Panc1 (cell line): ENCODE measurements at regions of chr15 and their contacts with region 1.

Region 1: DNA sequence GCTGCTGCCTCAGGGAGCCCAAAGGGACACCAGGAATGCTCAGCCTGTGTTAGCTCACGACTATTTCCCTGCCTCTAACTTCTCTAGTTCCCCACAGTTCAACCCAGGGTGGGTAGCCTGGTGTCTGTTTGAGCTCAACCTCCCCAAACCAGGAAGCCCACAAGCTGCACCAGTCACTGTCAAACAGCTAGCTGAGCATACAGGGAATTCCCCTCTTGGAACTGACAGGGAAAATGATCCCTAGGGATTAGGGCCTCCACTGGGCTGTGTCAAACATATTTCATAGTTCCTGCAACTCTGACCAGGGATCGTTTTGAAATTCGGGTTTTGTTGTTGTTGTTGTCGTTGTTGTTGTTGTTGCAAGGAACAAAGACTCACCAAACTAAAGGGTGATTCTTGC is 147.1 kb upstream of the ICE2 start:
- DNase-seq: no peak
- ATAC-seq: no peak
- H3K4me3 ChIP-seq: no peak overlapping the region
- H3K27ac ChIP-seq: no peak overlapping the region
- H3K4me1 ChIP-seq: no peaks in the 10 kb centered on the region
- H3K27me3 ChIP-seq: no peaks in the 10 kb centered on the region
- CTCF ChIP-seq: no peak

Region 2: DNA sequence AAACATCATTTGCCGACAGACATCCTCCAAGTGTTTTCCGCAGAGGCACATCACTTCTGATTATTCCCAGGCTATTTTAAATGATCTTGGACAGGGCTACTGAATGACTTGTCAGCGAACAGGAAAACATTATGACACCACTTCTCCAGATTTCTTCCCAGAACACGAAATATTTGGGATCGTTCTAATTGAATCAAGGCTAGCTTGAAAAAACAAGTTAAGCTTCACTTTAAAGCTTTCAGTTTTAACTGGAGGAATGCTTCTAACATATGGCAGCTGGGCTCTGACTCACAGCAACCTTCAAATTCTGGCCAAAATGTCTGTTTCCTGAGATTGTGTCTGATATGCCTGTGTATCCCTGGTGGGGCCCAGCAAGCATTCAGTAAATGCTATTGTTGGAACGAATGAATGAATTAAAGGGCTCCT is 20.2 kb before region 1 on chr15:
- CTCF ChIA-PET with region 1: no interaction called
- POLR2A ChIA-PET with region 1: no interaction called
- in situ Hi-C with region 1: no loop called
- intact Hi-C with region 1: no loop called
- DNase-seq: no peak
- ATAC-seq: no peak
- H3K4me3 ChIP-seq: no peak overlapping the region
- H3K27ac ChIP-seq: no peak overlapping the region
- H3K4me1 ChIP-seq: peaks cover 4% of the 10 kb centered on the region; the same call in 1 of the 2 replicates
- H3K27me3 ChIP-seq: peaks cover 44% of the 10 kb centered on the region
- CTCF ChIP-seq: no peak

Region 3: GRCh38 chr15:61146931-61147230 is 520.8 kb after region 1 on chr15:
- CTCF ChIA-PET with region 1: no interaction called
- POLR2A ChIA-PET with region 1: no interaction called
- in situ Hi-C with region 1: no loop called
- intact Hi-C with region 1: loop called (anchors 5 kb)
- DNase-seq: no peak
- ATAC-seq: no peak
- H3K4me3 ChIP-seq: no peak overlapping the region
- H3K27ac ChIP-seq: no peak overlapping the region
- H3K4me1 ChIP-seq: no peaks in the 10 kb centered on the region
- H3K27me3 ChIP-seq: peaks cover 15% of the 10 kb centered on the region
- CTCF ChIP-seq: no peak